ENCODE measurements at regions of chr4 and their contacts with region 1.

Region 1: GRCh38 chr4:56460085-56460484 is 7.3 kb upstream of the SRP72 start:
- DNase-seq: no peak
- H3K4me3 Mint-ChIP-seq: no peak overlapping the region
- H3K27ac Mint-ChIP-seq: peak overlapping the region; percentile 58
- H3K4me1 Mint-ChIP-seq: peaks cover 20% of the 10 kb centered on the region
- H3K27me3 Mint-ChIP-seq: no peaks in the 10 kb centered on the region

Region 2: DNA sequence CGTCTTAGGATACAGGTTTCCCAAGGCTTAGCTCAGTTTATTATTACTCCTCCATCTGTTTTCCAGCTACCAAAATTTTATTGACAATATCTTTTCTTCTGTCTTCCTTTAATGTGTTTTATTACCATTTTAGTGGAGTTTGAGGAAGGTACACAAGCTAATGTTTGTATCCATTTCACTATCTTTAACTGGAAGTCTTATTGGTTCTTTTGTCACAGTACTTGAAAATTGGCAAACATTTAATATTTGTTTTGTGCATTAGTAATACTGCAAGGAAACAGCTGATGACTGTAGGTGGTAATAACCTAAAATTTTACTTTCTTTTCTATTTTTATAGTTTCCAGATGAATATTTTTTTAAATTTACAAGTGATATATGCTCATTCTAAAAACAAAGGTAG is 36.2 kb after region 1 on chr4:
- intact Hi-C with region 1: loop called (anchors 5 kb)
- DNase-seq: no peak
- H3K4me3 Mint-ChIP-seq: no peak overlapping the region
- H3K27ac Mint-ChIP-seq: no peak overlapping the region
- H3K4me1 Mint-ChIP-seq: no peaks in the 10 kb centered on the region
- H3K27me3 Mint-ChIP-seq: no peaks in the 10 kb centered on the region